ENCODE measurements at regions of chr1 and their contacts with region 1.

Region 1: GRCh38 chr1:207797229-207797961 is 45.5 kb downstream of the CD46 start:
- DNase-seq: peak; percentile 77

Region 2: DNA sequence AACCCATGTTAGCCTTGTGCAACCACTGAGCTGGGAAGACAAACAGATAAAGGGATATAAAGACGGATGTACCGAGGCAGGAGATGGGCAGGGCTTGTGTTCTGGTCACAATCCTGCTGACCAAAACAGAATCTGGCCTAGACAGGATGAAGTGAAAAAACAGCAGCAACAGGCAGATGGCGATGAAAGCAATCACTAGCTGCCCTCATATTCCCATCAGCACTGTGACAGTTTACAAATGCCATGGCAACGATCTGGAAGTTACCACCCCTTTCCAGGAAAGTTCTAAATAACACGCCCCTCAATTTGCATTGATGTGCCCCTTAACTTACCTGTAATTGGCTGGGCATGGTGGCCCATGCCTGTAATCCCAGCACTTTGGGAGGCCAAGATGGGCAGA is 86.1 kb before region 1 on chr1:
- CTCF ChIA-PET with region 1: interaction called, 20 read pairs
- POLR2A ChIA-PET with region 1: no interaction called
- DNase-seq: peak; percentile 23

Measured in HEK293T (cell line).